Left cardiac atrium (tissue), 4 donors: ENCODE measurements at regions of chr7 and their contacts with region 1.

Region 1: DNA sequence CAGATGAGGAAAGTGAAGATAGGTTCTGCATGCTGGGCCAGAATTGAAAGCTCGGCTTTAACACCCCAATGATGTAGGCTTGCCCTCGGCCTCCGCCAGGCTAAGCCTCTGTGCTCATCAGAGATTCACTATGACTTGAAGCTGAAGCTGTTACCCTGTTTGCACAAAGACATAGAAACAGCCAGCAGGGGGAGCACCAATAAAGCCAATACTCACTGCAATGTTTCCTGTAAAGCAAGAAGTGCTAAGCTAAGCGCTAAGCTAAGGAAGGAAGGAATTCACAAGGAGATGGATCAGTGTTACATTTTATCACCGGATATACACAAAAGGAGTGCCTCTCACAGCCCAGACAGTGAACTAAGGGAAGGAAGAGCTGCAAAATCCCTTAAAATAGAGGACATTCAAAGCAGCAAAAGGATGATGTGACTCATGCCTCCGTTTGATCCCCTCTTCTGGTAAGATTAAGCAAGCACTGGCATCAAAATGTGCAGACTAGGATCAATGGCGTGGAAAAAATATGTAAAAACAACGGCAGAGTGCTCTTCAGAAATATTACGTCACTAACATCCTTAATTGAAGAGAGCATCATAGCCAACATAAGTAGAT is 153.8 kb downstream of the COBL start:
- DNase-seq: peak; percentile 73
- ATAC-seq: peak; percentile 53 to 94

Region 2: DNA sequence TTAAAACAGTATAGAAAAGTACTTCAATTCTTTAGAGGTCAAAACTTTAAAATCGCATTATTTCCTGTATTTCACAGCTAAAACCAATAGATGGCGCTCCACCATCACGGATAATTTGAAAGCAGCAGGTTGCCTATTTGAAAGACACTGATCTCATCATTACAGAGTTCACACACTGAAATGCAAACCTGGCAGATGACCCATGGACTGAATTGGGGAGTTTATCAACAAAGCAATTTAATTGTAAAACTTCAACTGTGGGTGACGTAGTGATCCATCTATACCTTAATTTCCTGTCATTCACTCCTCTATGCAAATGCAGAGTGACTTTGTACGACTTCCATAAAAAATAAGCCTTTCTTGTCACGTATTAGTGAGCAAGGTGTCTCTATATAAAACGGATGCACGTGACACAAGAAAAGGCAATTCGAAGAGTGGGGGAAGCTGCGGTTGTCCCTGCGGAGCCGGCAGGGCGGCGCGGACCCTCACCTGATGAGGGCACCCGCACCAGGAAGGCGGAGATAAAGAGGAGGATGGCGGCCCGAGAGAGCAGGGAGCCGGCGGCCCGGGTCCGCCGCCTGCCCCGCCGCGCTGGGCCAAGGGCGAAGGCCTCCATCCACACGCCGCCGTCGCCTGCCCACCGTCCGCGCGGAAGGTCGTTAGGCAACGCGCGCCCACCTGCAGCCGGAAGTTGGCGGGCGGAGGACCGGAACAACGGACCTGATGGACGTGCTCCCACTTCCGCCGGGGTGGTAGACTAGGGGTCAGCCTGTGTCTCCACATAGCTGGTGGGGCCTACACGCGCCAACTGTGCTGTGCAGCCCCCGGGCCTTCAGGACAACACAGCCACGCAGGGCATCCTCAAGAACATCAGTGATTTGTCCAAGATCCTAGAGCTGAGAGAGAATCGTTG is 1070.0 kb before region 1 on chr7 and contains the start of gene ZPBP:
- intact Hi-C with region 1: loop called in 1 of 2 experiments (anchors 5 kb)
- DNase-seq: peak; percentile 22
- ATAC-seq: peak; percentile 71 to 76
- total RNA-seq, gene ZPBP: not detected

Region 3: GRCh38 chr7:50142425-50143017 is 1020.3 kb before region 1 on chr7:
- intact Hi-C with region 1: loop called in 1 of 2 experiments (anchors 5 kb)
- DNase-seq: no peak
- ATAC-seq: no peak

Region 4: GRCh38 chr7:50206453-50207250 is 956.2 kb before region 1 on chr7:
- intact Hi-C with region 1: loop called in 1 of 2 experiments (anchors 10 kb)
- DNase-seq: peak; percentile 39
- ATAC-seq: peak; percentile 32 to 54

Region 5: GRCh38 chr7:51366930-51367613 is 204.2 kb after region 1 on chr7:
- intact Hi-C with region 1: loop called (anchors 2 to 5 kb)
- DNase-seq: no peak
- ATAC-seq: peak; percentile 88 to 90